Common myeloid progenitor, CD34-positive (primary cell): ENCODE measurements at regions of chr1 and their contacts with region 1.

Region 1: DNA sequence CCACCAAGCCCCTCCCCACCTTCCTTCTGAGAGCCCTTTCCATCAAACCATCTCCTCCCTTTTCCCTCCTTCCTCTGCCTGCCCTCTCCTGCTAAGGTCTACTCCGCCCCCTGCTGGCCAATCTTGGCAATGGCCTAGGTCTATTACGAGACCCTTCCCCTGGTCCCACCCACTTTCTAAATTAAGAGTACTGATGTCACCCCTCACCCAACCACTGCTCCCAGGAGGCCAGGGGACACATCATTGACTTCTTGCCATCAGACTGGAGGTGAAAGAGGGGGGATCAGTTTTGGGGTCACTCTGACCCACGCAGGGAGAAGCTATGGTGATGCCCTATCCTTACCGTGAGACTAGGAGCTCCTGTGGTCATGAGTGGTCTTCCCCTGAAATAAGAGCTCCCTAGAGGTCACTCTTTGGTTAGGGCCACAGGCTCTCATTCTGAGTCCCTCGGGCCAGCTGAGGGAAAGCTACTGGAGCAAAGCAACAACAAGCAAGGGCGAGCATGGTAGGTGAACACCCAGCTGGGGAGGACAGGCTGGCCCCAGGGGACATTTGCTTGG is 34.6 kb upstream of the S100A7 start:
- DNase-seq: peak; percentile 70 to 82 (median 73)
- H3K4me3 ChIP-seq: no peak overlapping the region
- H3K27ac ChIP-seq: no peak overlapping the region
- H3K4me1 ChIP-seq: peaks cover 0 to 19% (median 14%) of the 10 kb centered on the region in 4 experiments
- H3K27me3 ChIP-seq: peaks cover 0 to 4% (median 1%) of the 10 kb centered on the region in 5 experiments

Region 2: GRCh38 chr1:153465811-153466636 is 29.0 kb before region 1 on chr1:
- CTCF ChIA-PET with region 1: interaction called, 16 read pairs
- POLR2A ChIA-PET with region 1: no interaction called
- DNase-seq: peak; percentile 40 to 67 (median 63)
- H3K4me3 ChIP-seq: no peak overlapping the region
- H3K27ac ChIP-seq: no peak overlapping the region
- H3K4me1 ChIP-seq: peaks cover 0 to 3% (median 0%) of the 10 kb centered on the region in 4 experiments
- H3K27me3 ChIP-seq: peaks cover 0 to 8% (median 0%) of the 10 kb centered on the region in 5 experiments

Region 3: GRCh38 chr1:153510984-153511410 is 15.9 kb after region 1 on chr1:
- CTCF ChIA-PET with region 1: interaction called, 18 read pairs
- POLR2A ChIA-PET with region 1: no interaction called
- DNase-seq: peak; percentile 61 to 74 (median 63)
- H3K4me3 ChIP-seq: no peak overlapping the region
- H3K27ac ChIP-seq: no peak overlapping the region
- H3K4me1 ChIP-seq: peaks cover 0 to 14% (median 9%) of the 10 kb centered on the region in 4 experiments
- H3K27me3 ChIP-seq: no peaks in the 10 kb centered on the region

Region 4: GRCh38 chr1:153540395-153541361 is 45.6 kb after region 1 on chr1 and contains the start of gene S100A5:
- CTCF ChIA-PET with region 1: no interaction called
- POLR2A ChIA-PET with region 1: no interaction called
- DNase-seq: peak; percentile 67 to 91 (median 86)
- H3K4me3 ChIP-seq: peak within 1 kb of the TSS in 1 of 7 experiments; percentile 12
- H3K27ac ChIP-seq: no peak within 1 kb of the TSS
- H3K4me1 ChIP-seq: peaks cover 5 to 76% (median 58%) of the 10 kb centered on the region in 4 experiments
- H3K27me3 ChIP-seq: no peaks in the 10 kb centered on the region